ENCODE measurements at regions of chr9 and their contacts with region 1.

Region 1: GRCh38 chr9:125189361-125190289 is at the start of gene PPP6C:
- DNase-seq: peak; percentile 99
- H3K4me3 Mint-ChIP-seq: peak within 1 kb of the TSS; percentile 98
- H3K27ac Mint-ChIP-seq: peak within 1 kb of the TSS; percentile 96
- H3K4me1 Mint-ChIP-seq: peaks cover 30% of the 10 kb centered on the region
- H3K27me3 Mint-ChIP-seq: no peaks in the 10 kb centered on the region
- total RNA-seq, gene PPP6C: 48.1 and 52.5 TPM in 2 replicates

Region 2: DNA sequence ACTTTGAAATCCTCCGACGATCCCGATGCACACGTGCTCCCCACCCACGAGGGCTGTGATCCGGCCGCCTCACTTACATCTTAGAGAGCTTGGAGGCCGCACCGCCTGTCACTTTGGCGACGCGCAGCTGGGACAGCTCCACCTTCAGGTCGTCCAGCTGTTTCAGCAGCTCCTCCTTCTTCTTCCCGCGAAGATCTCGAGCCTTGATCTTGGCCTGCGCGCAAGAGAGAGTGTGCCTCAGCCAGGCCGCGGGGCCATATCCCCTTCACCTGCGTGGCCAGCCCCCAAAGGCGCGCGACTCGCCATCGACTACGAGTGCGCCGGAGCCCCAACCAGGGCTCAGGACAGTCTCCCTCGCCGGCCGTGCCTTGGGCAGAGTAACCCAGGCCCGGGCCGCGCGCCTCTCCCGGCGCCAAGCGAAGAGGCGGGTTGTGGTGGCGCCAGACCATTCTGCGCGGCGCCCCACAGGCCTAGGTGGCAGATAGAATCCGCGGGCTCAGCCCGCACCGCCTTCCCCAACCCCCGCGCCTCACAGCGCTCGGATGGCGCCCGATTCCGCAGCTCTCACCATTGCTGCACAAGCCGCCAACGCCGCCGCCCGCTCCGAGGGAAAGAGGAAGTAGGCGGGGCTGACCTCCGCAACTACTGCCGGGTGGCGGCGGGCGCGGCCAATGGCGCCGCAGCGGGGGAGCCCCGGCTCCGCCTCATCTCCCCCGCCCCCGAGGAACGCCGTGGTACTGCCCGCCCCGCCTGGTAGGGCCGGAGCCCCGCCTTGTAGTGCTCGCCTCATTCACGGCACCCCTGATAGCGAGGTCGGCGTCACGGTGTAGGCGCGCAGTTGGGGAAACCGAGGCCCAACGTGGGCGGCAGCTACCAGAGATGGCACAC is 328.0 kb before region 1 on chr9 and contains the starts of genes ARPC5L and RPL35:
- intact Hi-C with region 1: loop called (anchors 2 kb)
- DNase-seq: peak; percentile 99
- H3K4me3 Mint-ChIP-seq: peak within 1 kb of the TSS; percentile 98
- H3K27ac Mint-ChIP-seq: peak within 1 kb of the TSS; percentile 98
- H3K4me1 Mint-ChIP-seq: peaks cover 21% of the 10 kb centered on the region
- H3K27me3 Mint-ChIP-seq: no peaks in the 10 kb centered on the region
- total RNA-seq, gene ARPC5L: 99.8 and 103 TPM in 2 replicates
- total RNA-seq, gene RPL35: 1,878 and 1,905 TPM in 2 replicates

Region 3: DNA sequence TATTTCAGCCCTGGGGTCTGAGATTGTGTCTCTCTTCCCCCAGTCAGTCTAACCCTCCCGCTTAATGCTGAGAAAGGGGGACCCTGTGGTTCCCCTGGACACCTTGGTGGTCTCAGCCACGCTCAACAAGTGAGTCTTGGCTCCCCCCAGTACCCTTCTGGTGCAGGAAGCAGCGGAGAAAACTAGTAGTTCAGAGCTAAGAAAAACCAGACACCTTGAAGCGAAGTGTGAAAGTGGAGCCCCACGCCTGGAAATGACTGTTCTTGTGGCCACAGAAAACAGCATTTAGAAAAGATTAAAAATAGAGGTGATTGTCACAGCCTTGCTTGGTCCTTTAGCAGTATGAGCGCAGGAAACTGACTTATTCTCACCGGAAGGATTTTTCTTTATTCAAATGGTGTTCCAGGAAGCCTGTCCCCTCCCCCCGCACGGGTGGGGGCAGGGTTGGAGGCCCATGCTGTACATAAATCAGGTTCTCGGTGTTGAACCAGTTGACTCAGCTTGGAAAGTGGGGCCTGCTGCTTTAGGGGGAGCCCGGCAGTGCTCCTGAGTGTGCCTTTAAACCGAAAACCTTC is 319.6 kb before region 1 on chr9:
- intact Hi-C with region 1: loop called (anchors 1 kb)
- DNase-seq: peak; percentile 94
- H3K4me3 Mint-ChIP-seq: peak overlapping the region; percentile 99
- H3K27ac Mint-ChIP-seq: peak overlapping the region; percentile 99
- H3K4me1 Mint-ChIP-seq: peaks cover 42% of the 10 kb centered on the region
- H3K27me3 Mint-ChIP-seq: no peaks in the 10 kb centered on the region

Region 4: GRCh38 chr9:125200210-125201047 is 10.8 kb after region 1 on chr9 and contains the start of gene RABEPK:
- intact Hi-C with region 1: loop called (anchors 1 kb)
- DNase-seq: peak; percentile 98
- H3K4me3 Mint-ChIP-seq: peak within 1 kb of the TSS; percentile 95
- H3K27ac Mint-ChIP-seq: peak within 1 kb of the TSS; percentile 92
- H3K4me1 Mint-ChIP-seq: peaks cover 14% of the 10 kb centered on the region
- H3K27me3 Mint-ChIP-seq: peaks cover 5% of the 10 kb centered on the region
- total RNA-seq, gene RABEPK: 36.6 and 37.7 TPM in 2 replicates

Region 5: DNA sequence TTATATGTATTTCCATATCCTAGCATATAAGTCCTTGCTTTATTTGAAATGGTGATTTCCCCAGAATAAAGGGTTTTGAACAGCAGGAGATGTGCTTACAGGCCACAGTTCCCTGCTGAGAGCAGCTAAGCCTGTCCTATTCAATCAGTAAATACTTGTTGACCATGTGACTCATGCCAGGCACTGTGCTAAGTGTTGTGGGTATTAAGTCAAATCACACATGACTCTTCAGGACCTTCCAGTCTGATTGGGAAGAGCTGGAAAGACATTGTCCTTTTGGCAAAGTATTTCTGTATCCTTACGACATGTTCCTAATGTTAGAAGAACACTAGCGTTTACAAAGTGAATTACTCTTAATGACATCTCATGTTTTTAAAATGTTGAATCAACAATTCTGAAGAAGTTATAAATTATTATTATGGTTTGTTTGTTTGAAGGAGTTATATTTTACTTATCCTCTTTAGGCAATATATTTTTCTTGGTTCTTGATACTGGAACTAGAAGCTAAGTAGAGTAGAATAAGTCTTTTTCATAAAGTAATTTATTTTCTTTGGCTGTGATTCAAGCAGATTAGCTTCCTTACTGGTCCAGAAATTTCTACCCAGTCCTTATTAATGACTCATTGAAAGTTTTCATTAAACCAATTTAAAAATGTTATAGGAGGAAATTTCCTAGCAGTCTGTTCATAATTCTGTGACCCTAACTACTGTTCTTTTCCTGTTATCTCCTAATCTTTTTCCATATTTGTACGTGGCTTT is 154.1 kb after region 1 on chr9:
- intact Hi-C with region 1: no loop called
- DNase-seq: no peak
- H3K4me3 Mint-ChIP-seq: no peak overlapping the region
- H3K27ac Mint-ChIP-seq: no peak overlapping the region
- H3K4me1 Mint-ChIP-seq: no peaks in the 10 kb centered on the region
- H3K27me3 Mint-ChIP-seq: no peaks in the 10 kb centered on the region

Measured in activated CD4-positive, alpha-beta T cell treated with anti-CD3 and anti-CD28 coated beads, Interleukin-2, amount 10 ng/mL, durations not matched to agents 24 days and 14 days (primary cell).